Naive thymus-derived CD8-positive, alpha-beta T cell (primary cell): ENCODE measurements at regions of chr19 and their contacts with region 1.

Region 1: DNA sequence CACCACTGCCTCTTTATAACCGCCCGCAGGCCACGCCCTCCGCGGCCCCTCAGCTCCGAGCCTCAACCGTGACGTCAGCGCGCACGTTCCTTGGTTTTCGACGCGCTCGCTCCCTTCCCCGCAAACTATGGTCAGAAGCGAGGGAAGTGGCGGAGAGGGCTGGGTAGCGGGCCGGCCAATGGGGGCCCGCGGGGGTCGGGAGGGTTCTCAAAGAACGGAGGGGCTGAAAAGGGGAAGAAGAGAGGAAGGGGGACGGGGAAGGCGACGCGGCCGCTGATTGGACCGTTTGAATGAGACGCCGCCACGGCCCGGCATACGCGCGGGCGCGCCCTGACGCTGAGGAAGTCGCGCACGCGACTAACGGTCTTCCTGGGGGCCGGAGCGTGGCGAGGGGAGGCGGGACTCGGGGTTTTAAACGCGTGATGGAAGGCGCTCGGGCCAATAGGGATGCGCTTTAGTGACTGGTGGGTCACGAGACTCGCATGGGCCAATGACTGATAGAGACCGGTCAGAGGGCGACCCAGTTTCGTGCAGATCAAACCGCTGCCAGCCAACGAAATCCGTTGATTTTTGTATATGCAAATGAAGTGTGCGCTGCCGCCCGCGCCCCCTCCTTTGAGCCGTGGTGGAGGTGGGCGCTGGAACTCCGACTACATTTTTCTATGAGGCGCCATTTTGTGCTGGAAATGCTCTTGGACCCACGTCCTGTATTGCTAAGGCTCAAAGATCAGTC is 378 bp upstream of the UBE2S start:
- DNase-seq: peak; percentile 94 to 99 (median 97)
- ATAC-seq: peak; percentile 91 to 92
- H3K4me3 Mint-ChIP-seq: peak overlapping the region; percentile 88 to 98 (median 94)
- H3K27ac Mint-ChIP-seq: peak overlapping the region; percentile 93 to 100 (median 99)
- H3K4me1 Mint-ChIP-seq: peaks cover 20 to 39% (median 30%) of the 10 kb centered on the region in 4 donors
- H3K27me3 Mint-ChIP-seq: peaks cover 0 to 3% (median 0%) of the 10 kb centered on the region in 5 donors

Region 2: GRCh38 chr19:55117636-55118391 is 290.2 kb before region 1 on chr19 and contains the start of gene PPP1R12C:
- POLR2A ChIA-PET with region 1: interaction called, 10 read pairs
- DNase-seq: peak; percentile 85 to 98 (median 93)
- ATAC-seq: peak; percentile 89 to 91
- H3K4me3 Mint-ChIP-seq: peak within 1 kb of the TSS; percentile 90 to 99 (median 98)
- H3K27ac Mint-ChIP-seq: peak within 1 kb of the TSS; percentile 94 to 97 (median 96)
- H3K4me1 Mint-ChIP-seq: peaks cover 20 to 40% (median 38%) of the 10 kb centered on the region in 4 donors
- H3K27me3 Mint-ChIP-seq: peaks cover 0 to 5% (median 4%) of the 10 kb centered on the region in 5 donors
- polyA plus RNA-seq, gene PPP1R12C: 2.7 to 6.2 (median 3.9) TPM

Region 3: GRCh38 chr19:55467236-55468053 is 59.5 kb after region 1 on chr19:
- POLR2A ChIA-PET with region 1: no interaction called
- DNase-seq: peak in 8 of 10 donors; percentile 35 to 80 (median 60)
- ATAC-seq: peak; percentile 77 to 99
- H3K4me3 Mint-ChIP-seq: no peak overlapping the region
- H3K27ac Mint-ChIP-seq: no peak overlapping the region
- H3K4me1 Mint-ChIP-seq: peaks cover 1 to 4% (median 3%) of the 10 kb centered on the region in 4 donors
- H3K27me3 Mint-ChIP-seq: peaks cover 0 to 2% (median 0%) of the 10 kb centered on the region in 5 donors